Body of pancreas (tissue), 4 donors: ENCODE measurements at regions of chr21 and their contacts with region 1.

Region 1: GRCh38 chr21:42117229-42117966 is 46.3 kb downstream of the UMODL1 start:
- DNase-seq: peak; percentile 74 to 83 (median 77)
- ATAC-seq: peak; percentile 90
- H3K4me3 ChIP-seq: no peak overlapping the region
- H3K27ac ChIP-seq: no peak overlapping the region
- H3K4me1 ChIP-seq: peaks cover 4% of the 10 kb centered on the region
- H3K27me3 ChIP-seq: no peaks in the 10 kb centered on the region
- CTCF ChIP-seq: peak; percentile 67 to 96 (median 89)
- POLR2A ChIP-seq: no peak

Region 2: DNA sequence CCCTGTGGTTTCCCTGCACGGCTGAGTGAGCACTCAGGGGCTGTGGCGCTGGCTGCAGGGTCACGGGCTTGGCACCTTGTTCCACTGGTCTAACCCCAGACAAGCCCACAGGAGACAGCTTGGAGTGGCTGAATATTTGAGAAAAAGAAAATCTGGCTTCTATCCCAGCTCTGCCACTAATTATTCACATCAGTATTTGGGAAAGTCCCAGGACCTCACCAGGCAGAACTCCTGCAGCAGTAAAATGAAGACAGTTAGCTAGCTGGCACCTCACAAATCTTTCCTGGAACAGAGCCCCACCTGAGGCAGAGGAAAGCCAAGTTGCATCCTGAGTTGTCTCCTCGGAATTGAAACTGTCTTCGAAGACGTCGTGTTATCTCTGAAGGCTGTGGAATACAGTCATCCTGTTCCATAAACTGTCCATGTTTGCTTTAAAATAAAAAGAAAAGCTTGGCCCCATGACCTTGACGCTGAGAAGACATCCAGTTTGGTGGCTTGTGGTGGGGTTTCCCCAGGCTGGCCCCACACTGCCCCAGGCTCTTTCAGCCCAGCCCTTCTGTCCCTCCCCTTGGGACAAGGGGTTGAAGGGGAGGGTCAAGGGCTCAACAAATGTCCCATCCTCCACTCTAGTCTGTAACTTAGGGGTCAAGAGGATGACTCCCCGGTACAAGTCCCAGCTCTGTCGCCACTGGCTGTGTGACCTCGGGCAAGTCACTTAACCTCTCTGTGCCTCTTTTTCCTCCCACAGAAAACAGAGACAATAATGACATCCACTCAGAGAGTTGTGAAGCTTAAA is 515.6 kb before region 1 on chr21:
- intact Hi-C with region 1: loop called (anchors 10 kb)
- DNase-seq: peak in 3 of 4 donors; percentile 37 to 48 (median 45)
- ATAC-seq: peak; percentile 68
- H3K4me3 ChIP-seq: no peak overlapping the region
- H3K27ac ChIP-seq: peak overlapping the region in 3 of 4 donors; percentile 50 to 65 (median 61)
- H3K4me1 ChIP-seq: peaks cover 20% of the 10 kb centered on the region
- H3K27me3 ChIP-seq: no peaks in the 10 kb centered on the region
- CTCF ChIP-seq: no peak
- POLR2A ChIP-seq: no peak

Region 3: DNA sequence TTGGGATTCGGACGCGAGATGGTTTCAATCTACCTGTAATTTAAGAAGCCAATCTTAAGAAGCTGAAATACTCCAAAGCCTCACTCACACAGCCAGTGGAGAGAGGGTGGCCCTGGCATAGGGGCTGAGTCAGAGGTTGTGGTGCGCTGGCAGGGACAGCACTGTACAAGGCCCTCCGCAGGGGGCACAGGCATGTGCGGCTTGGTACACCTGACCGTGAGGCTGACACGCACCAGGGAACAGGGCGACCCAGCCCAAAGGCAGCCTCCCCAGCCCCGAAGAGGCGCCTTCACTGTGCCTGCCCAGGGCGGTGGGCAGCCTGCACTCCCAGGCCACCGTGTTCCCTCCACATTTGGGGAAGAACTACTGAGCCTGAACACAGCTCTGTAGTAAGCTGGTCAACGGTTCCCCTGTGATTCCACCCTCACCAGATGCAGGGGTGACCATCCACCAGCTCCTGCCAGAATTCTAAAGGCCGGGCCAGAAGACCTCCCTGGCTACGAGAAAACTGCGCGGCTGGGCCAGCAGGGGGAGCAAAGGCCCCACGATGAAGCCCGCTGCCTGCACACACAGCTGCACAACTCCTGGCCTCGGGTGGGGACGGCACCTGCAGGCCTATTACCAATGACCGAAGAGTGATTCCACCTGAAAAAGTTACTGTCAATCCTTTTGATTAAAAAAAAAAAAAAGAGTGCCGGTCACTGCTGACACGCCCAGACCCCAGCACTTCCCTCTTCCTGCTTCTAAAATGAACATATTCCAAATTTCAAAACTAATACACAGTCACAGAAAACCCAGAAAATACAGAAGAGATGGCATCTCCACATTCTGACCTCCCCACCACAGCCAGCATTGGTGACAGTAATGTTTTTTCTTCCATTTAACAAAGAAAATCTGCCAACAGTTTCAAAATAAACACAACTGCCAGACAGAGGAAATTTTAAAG is 300.9 kb before region 1 on chr21:
- intact Hi-C with region 1: loop called (anchors 5 kb)
- DNase-seq: peak; percentile 70 to 78 (median 72)
- ATAC-seq: peak; percentile 88
- H3K4me3 ChIP-seq: no peak overlapping the region
- H3K27ac ChIP-seq: peak overlapping the region in 1 of 4 donors; percentile 4
- H3K4me1 ChIP-seq: peaks cover 7% of the 10 kb centered on the region
- H3K27me3 ChIP-seq: no peaks in the 10 kb centered on the region
- CTCF ChIP-seq: peak; percentile 40 to 80 (median 74)
- POLR2A ChIP-seq: no peak